Breast epithelium (tissue), 4 donors: ENCODE measurements at regions of chr19 and their contacts with region 1.

Region 1: GRCh38 chr19:49676690-49677231 is 310 bp upstream of the PRMT1 start:
- DNase-seq: peak; percentile 100
- H3K4me3 ChIP-seq: peak overlapping the region; percentile 64 to 98 (median 84)
- H3K27ac ChIP-seq: peak overlapping the region; percentile 95 to 96
- H3K4me1 ChIP-seq: peaks cover 12 to 15% of the 10 kb centered on the region in 2 donors
- H3K27me3 ChIP-seq: no peaks in the 10 kb centered on the region
- CTCF ChIP-seq: no peak
- POLR2A ChIP-seq: no peak

Region 2: GRCh38 chr19:49624967-49625910 is 51.5 kb before region 1 on chr19:
- intact Hi-C with region 1: no loop called
- DNase-seq: no peak
- H3K4me3 ChIP-seq: no peak overlapping the region
- H3K27ac ChIP-seq: no peak overlapping the region
- H3K4me1 ChIP-seq: no peaks in the 10 kb centered on the region
- H3K27me3 ChIP-seq: no peaks in the 10 kb centered on the region
- CTCF ChIP-seq: no peak
- POLR2A ChIP-seq: no peak

Region 3: GRCh38 chr19:49640113-49640898 is 36.5 kb before region 1 on chr19 and contains the start of gene RRAS:
- intact Hi-C with region 1: no loop called
- DNase-seq: peak; percentile 99 to 100
- H3K4me3 ChIP-seq: peak within 1 kb of the TSS; percentile 97 to 99 (median 98)
- H3K27ac ChIP-seq: peak within 1 kb of the TSS; percentile 99 to 100
- H3K4me1 ChIP-seq: peaks cover 5 to 23% of the 10 kb centered on the region in 2 donors
- H3K27me3 ChIP-seq: no peaks in the 10 kb centered on the region
- CTCF ChIP-seq: peak in 1 of 3 donors; percentile 32
- POLR2A ChIP-seq: peak; percentile 78
- total RNA-seq, gene RRAS: 34.8 to 114 (median 41.0) TPM

Region 4: GRCh38 chr19:49654584-49654983 is 22.2 kb before region 1 on chr19:
- intact Hi-C with region 1: loop called (anchors 1 kb)
- DNase-seq: no peak
- H3K4me3 ChIP-seq: no peak overlapping the region
- H3K27ac ChIP-seq: no peak overlapping the region
- H3K4me1 ChIP-seq: no peaks in the 10 kb centered on the region
- H3K27me3 ChIP-seq: no peaks in the 10 kb centered on the region
- CTCF ChIP-seq: no peak
- POLR2A ChIP-seq: no peak